ENCODE measurements at regions of chr7 and their contacts with region 1.

Region 1: DNA sequence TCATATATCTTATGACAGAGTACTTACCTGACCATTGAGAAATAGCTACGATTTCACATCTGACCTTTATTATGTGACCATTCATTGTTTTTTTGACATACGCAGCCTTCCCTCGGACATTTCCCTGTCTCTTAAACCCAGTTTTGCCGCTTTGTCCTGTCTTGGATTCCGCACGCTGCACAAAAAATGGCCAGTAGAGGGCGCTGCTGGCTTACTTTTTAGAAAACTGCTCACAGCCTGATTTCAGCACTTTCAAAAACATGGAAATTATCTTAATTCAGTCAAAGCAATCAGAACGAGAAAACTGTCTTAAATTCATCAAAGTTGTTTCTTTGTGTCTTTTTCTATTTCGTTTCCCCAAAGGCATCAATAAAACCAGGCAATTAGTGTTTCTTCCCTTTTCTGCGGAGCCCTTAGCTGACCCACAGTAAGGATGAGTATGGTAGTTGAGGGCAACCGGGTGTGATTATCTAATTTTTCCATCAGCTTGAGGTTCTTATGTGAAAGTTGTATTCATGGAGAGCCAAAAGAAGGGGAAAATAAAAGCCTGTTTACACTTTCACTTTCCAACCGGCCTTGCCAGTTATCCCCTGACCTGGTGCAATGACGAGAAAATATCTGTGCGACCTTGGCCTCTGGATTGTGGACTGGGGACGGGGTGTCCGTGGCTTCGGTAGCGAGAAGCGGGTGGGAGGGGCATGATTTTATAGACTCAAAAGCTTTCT is 144.4 kb downstream of the DYNC1I1 start:
- DNase-seq: peak; percentile 85
- H3K4me3 Mint-ChIP-seq: no peak overlapping the region
- H3K27ac Mint-ChIP-seq: no peak overlapping the region
- H3K4me1 Mint-ChIP-seq: peaks cover 3% of the 10 kb centered on the region
- H3K27me3 Mint-ChIP-seq: peaks cover 24% of the 10 kb centered on the region

Region 2: DNA sequence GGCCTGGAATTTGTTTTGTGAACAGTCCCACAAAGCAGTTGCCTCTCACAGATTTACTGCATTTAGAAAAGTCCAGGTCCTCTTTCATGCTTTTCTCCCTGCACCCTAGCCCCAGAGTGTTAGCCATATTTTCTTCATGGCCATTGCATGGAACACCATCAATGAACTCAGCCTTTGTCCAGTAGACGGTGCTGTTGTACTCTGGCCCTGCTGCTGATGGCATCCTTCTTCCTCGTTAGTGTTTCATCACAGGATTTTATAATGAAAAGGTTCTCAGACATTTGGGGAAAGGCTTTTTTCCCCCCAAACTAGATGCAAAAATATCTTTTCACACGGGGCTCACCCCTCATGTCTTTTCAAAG is 498.2 kb after region 1 on chr7:
- CTCF ChIA-PET with region 1: no interaction called
- intact Hi-C with region 1: loop called (anchors 2 kb)
- DNase-seq: peak; percentile 69
- H3K4me3 Mint-ChIP-seq: no peak overlapping the region
- H3K27ac Mint-ChIP-seq: no peak overlapping the region
- H3K4me1 Mint-ChIP-seq: no peaks in the 10 kb centered on the region
- H3K27me3 Mint-ChIP-seq: peaks cover 18% of the 10 kb centered on the region

Region 3: GRCh38 chr7:97064967-97065587 is 1148.3 kb after region 1 on chr7:
- CTCF ChIA-PET with region 1: interaction called, 13 read pairs
- intact Hi-C with region 1: loop called (anchors 1 kb)
- DNase-seq: peak; percentile 11
- H3K4me3 Mint-ChIP-seq: no peak overlapping the region
- H3K27ac Mint-ChIP-seq: no peak overlapping the region
- H3K4me1 Mint-ChIP-seq: no peaks in the 10 kb centered on the region
- H3K27me3 Mint-ChIP-seq: peaks cover 8% of the 10 kb centered on the region

Measured in activated naive CD4-positive, alpha-beta T cell treated with anti-CD3 and anti-CD28 coated beads for 36 hours (primary cell).